Activated T-helper 2 cell treated with anti-CD3 and anti-CD28 coated beads, Interferon-gamma antibody, Interleukin-2, Interleukin-4, amounts not matched to agents 10 μg/mL and 5 μg/mL and 100 μg/mL, durations not matched to agents 14 hours and 24 hours and 36 hours (primary cell): ENCODE measurements at regions of chr2 and their contacts with region 1.

Region 1: DNA sequence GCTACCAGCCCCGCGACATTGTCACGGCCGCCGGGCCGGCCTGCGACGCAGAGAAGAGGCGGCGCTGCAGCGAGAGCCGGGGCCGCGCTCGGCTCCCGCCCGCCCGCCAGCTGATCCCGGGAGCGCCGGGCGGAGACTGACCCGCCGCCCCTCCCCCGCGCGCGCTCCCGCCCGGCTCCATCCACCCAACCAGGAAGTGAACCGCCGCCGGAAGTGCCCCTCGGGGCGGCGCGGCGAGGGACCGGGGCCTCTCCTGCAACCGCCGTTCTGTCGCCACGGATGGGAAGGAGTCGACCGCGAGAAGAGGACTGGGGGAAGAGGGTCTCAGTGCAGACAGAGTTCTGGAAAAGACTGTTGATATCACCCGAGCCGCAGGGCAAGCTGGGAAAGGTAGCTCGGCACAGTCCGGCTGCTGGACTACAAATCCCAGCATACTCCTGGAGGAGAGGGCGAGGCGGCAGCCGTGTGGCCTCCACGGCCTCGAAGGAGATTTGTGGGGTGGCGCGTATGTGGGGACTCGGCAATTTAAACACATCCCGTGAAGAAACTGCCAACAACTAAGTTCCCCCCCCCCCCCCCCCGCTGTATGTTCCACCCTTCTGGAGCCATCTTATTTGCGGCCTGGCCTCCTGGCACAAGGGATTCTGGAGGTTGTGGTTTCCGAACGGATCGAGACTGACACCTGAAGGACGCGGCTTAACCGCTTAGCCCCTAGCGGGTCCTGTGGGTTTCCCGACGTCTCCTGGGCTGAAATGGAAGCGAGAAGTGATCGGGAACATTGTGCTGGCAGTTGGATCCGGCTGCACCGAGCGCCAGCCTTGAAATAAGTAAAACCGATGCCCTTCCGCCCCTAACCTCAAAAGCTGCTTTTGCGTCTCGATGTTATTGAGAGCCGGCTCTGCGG is at the start of gene AAK1:
- DNase-seq: peak; percentile 79
- H3K4me3 Mint-ChIP-seq: peak within 1 kb of the TSS; percentile 95
- H3K27ac Mint-ChIP-seq: peak within 1 kb of the TSS; percentile 98
- H3K4me1 Mint-ChIP-seq: peaks cover 63% of the 10 kb centered on the region
- H3K27me3 Mint-ChIP-seq: no peaks in the 10 kb centered on the region
- total RNA-seq, gene AAK1: 108 TPM in 2 replicates

Region 2: DNA sequence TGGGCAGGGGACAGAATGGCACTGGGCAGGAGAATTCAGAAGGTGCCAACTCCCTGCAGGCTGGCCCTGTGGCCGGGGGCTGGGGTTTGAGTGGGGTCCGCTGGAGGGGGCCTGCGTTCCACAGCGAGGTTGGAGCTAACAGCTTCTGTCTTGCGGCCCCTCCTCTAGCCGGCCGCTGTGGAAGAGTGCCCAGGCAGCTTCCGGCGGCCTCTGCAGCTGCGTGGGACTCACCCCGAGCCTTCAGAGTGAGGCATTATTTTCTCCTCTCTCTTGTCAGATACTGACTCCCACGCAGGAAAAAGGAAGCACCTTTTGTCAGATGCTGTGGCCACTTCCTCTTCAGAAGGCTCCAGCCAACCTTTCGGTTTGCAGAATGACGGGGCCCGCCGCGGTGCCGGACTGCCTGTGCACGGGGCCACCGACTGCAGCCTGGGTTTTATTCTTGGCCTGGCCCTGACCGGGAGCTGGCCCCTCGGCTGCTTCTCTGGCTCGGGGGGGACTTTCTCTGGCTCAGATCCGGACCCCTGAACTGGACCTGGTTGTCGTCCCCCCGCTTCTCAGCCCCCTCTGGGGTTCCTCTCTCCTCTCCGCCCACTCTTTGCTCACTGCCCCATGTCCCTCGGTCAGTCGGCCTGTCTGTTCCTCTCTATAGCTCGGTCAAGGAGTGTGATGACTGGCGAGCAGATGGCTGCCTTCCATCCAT is 869.1 kb before region 1 on chr2:
- intact Hi-C with region 1: no loop called
- DNase-seq: peak; percentile 52
- H3K4me3 Mint-ChIP-seq: peak overlapping the region; percentile 77
- H3K27ac Mint-ChIP-seq: peak overlapping the region; percentile 86
- H3K4me1 Mint-ChIP-seq: peaks cover 83% of the 10 kb centered on the region
- H3K27me3 Mint-ChIP-seq: no peaks in the 10 kb centered on the region

Region 3: DNA sequence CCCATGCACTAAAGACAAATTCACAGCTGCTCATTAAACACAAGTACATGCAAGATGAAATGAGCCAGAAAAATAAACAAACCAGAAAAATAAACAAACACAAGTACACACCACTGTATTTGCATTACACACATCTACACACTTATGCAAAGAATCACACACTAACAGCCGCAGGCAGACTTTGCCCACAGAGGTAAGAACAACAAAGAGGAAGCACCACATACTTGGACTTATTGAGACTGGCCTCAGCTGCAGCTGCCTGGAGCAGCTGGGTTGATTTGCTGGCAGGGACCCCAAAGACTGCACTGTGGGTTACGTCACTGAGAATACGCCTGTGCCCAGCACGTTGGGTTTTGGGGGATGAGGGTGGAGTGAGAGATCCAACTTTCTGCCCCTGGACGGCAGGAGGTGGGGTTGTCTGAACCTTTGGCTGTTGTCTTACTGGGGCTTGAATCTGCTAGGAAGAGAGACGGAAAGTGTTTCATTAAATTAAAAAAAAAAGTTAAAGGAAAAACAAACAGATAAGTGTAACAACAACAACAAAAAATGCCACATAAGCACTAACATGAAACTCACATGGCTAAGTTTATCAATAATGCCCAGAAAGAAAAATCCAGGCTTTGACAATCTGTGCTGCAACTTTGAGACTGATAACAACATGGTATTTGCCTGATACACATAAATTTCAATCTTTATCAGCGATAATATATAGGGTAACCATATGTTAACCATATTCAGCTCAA is 134.7 kb before region 1 on chr2:
- intact Hi-C with region 1: loop called (anchors 5 kb)
- DNase-seq: no peak
- H3K4me3 Mint-ChIP-seq: no peak overlapping the region
- H3K27ac Mint-ChIP-seq: peak overlapping the region; percentile 86
- H3K4me1 Mint-ChIP-seq: peaks cover 36% of the 10 kb centered on the region
- H3K27me3 Mint-ChIP-seq: no peaks in the 10 kb centered on the region

Region 4: DNA sequence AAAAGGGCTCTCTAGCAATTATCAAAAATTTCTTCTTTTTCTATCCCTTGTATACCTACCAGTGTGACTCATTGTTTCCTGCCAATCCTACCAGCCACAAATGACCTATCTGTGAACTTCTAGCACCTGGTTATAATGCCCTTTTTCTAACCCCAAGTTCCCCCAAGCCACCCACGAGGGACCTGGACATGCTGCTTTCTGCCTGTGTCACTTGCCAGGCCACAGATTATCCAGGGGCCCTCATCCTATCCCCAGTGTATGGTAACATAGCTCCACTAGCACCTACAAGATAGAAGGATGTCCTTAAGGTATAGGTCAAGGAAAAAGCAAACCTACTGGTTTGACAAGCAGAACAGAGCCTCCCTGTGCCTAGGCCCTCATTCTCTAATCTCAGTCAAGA is 27.1 kb before region 1 on chr2:
- intact Hi-C with region 1: loop called (anchors 1 kb)
- DNase-seq: no peak
- H3K4me3 Mint-ChIP-seq: peak overlapping the region; percentile 3
- H3K27ac Mint-ChIP-seq: peak overlapping the region; percentile 31
- H3K4me1 Mint-ChIP-seq: peaks cover 29% of the 10 kb centered on the region
- H3K27me3 Mint-ChIP-seq: no peaks in the 10 kb centered on the region

Region 5: GRCh38 chr2:69683101-69683971 is 39.5 kb after region 1 on chr2:
- intact Hi-C with region 1: loop called (anchors 2 kb)
- DNase-seq: no peak
- H3K4me3 Mint-ChIP-seq: peak overlapping the region; percentile 51
- H3K27ac Mint-ChIP-seq: peak overlapping the region; percentile 90
- H3K4me1 Mint-ChIP-seq: peaks cover 57% of the 10 kb centered on the region
- H3K27me3 Mint-ChIP-seq: no peaks in the 10 kb centered on the region

Region 6: DNA sequence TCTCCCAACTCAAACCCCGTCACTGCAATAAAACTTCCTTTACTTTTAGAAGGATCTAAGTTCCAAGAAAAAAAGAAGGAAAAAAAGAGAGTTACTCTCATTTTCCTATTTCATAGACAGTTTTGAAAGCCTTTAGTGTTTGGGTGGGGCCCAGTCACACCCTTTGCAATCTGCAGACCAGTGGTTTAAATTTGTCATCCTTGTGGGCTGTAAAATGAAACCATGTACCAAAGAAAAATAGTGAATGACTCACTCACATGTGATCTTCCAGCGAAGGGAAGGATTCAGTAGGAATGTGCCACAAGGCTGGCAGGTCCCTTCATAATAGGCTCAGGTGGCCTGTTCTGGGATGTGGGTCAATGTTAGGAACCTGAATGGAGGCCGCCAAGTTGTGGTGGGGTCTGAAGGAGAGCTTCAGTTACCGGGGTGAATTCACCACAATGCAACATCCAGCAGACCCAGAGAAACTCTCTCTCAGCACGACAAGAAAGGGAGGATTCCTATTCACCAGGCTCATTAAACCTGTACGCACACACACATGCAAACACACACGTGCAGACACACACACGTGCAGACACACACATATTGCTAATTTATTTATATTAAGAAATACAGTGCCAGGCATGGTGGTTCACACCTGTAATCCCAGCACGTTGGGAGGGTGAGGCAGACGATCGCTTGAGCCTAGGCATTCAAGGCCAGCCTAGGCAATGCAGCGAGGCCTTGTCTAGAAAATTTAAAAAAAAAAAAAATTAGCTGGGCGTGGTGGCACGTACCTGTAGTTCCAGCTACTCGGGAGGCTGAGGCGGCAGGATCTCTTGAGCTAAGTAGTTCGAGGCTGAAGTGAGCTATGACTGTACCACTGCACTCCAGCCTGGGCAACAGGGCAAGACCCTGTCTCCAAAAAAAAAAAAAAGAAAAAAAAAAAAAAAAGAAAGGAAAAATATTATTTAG is 126.6 kb after region 1 on chr2:
- intact Hi-C with region 1: loop called (anchors 2 kb)
- DNase-seq: peak; percentile 33
- H3K4me3 Mint-ChIP-seq: peak overlapping the region; percentile 6
- H3K27ac Mint-ChIP-seq: peak overlapping the region; percentile 69
- H3K4me1 Mint-ChIP-seq: peaks cover 80% of the 10 kb centered on the region
- H3K27me3 Mint-ChIP-seq: no peaks in the 10 kb centered on the region